Natural killer cell (primary cell): ENCODE measurements at regions of chr7 and their contacts with region 1.

Region 1: GRCh38 chr7:148698397-148699023 is at the start of gene CUL1:
- DNase-seq: peak; percentile 72 to 91
- ATAC-seq: peak; percentile 78 to 88 (median 84)
- H3K4me3 ChIP-seq: peak within 1 kb of the TSS; percentile 85
- H3K4me3 Mint-ChIP-seq: peak within 1 kb of the TSS; percentile 95
- H3K27ac ChIP-seq: peak within 1 kb of the TSS; percentile 79
- H3K27ac Mint-ChIP-seq: peak within 1 kb of the TSS; percentile 81 to 88
- H3K4me1 ChIP-seq: peaks cover 22% of the 10 kb centered on the region
- H3K4me1 Mint-ChIP-seq: peaks cover 42 to 49% of the 10 kb centered on the region in 2 donors
- H3K27me3 ChIP-seq: no peaks in the 10 kb centered on the region
- H3K27me3 Mint-ChIP-seq: no peaks in the 10 kb centered on the region
- CTCF ChIP-seq: no peak
- total RNA-seq, gene CUL1: 37.4 to 45.1 (median 43.2) TPM

Region 2: GRCh38 chr7:147878912-147879661 is 819.4 kb before region 1 on chr7:
- intact Hi-C with region 1: no loop called
- DNase-seq: no peak
- ATAC-seq: no peak
- H3K4me3 ChIP-seq: no peak overlapping the region
- H3K4me3 Mint-ChIP-seq: no peak overlapping the region
- H3K27ac ChIP-seq: no peak overlapping the region
- H3K27ac Mint-ChIP-seq: no peak overlapping the region
- H3K4me1 ChIP-seq: no peaks in the 10 kb centered on the region
- H3K4me1 Mint-ChIP-seq: no peaks in the 10 kb centered on the region
- H3K27me3 ChIP-seq: no peaks in the 10 kb centered on the region
- H3K27me3 Mint-ChIP-seq: no peaks in the 10 kb centered on the region
- CTCF ChIP-seq: no peak

Region 3: DNA sequence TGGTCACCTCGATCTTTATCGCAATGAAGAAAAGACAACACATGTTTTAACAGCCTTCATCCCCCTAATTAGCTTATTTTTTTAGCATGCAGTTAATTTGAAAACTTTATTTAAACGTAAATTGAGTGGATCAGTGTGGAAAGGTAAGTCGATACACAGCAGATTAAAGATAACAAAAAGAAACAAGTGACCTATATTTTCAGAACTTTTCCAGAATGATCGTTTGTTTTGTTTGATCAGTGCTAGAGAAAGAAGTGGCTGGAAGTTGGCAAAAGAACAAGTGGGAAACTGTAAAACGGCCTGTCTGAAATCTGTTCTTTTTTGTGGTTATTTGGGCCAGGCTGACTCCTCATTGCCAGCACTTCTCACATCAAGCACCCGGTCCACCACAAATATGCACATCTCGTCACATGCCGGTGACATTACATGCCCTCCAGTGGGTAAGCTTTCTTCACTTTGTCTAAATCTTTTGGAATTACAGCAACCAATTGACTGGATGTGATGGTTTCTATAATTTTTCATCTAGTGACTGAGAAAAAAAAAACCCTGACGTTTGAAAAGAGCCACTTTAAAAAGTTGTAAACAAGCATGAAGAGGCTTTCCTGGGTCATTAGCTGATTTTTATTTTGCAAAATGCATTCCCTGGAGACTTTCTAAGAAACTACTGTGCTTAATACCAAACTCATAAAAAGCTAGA is 74.8 kb before region 1 on chr7:
- intact Hi-C with region 1: loop called (anchors 10 kb)
- DNase-seq: no peak
- ATAC-seq: peak in 2 of 3 donors; percentile 24 to 45
- H3K4me3 ChIP-seq: no peak overlapping the region
- H3K4me3 Mint-ChIP-seq: no peak overlapping the region
- H3K27ac ChIP-seq: no peak overlapping the region
- H3K27ac Mint-ChIP-seq: no peak overlapping the region
- H3K4me1 ChIP-seq: peaks cover 23% of the 10 kb centered on the region
- H3K4me1 Mint-ChIP-seq: peaks cover 16 to 29% of the 10 kb centered on the region in 2 donors
- H3K27me3 ChIP-seq: peaks cover 5% of the 10 kb centered on the region
- H3K27me3 Mint-ChIP-seq: peaks cover 48 to 50% of the 10 kb centered on the region in 2 donors
- CTCF ChIP-seq: no peak

Region 4: GRCh38 chr7:148773334-148773733 is 74.8 kb after region 1 on chr7:
- intact Hi-C with region 1: loop called (anchors 5 kb)
- DNase-seq: peak; percentile 29 to 69
- ATAC-seq: peak; percentile 90 to 100 (median 94)
- H3K4me3 ChIP-seq: no peak overlapping the region
- H3K4me3 Mint-ChIP-seq: peak overlapping the region; percentile 84
- H3K27ac ChIP-seq: peak overlapping the region; percentile 69
- H3K27ac Mint-ChIP-seq: peak overlapping the region; percentile 85 to 88
- H3K4me1 ChIP-seq: peaks cover 20% of the 10 kb centered on the region
- H3K4me1 Mint-ChIP-seq: peaks cover 33 to 40% of the 10 kb centered on the region in 2 donors
- H3K27me3 ChIP-seq: no peaks in the 10 kb centered on the region
- H3K27me3 Mint-ChIP-seq: no peaks in the 10 kb centered on the region
- CTCF ChIP-seq: no peak

Region 5: DNA sequence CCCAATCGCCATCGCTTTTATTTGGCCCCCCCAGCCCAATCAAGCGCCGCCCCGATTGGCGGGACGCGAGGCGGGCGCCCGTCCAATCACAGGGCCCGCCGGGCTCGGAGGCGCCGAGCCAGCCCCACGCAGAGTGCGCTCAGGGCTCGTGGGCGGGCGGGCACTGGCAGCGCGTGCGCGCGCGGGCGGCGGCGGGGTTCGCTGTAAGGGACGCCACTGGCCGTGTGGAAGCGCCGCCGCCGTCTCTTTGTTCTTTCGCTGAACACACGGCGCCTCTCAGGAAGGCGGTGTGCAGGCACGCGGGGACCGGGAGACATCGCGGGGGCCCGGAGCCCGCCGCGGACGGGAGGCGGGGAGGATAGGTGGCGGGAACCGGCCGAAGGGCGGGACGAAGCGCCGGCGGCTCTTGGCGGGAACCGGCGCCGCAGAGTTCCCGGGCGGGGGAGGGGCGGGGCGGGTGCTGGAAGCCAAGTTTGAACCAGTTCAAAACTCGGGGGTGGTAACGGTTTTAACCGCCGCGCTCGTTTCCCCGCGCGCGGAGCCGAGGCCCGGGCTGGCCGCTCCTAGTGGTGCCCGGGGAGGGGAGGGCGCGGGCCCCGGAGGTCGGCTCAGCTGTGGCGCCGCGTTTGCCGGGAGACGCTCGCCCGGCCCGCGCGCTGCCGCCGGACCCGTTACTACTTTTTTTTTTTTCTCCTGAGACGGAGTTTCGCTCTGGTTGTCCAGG is 186.0 kb after region 1 on chr7:
- intact Hi-C with region 1: loop called (anchors 10 kb)
- DNase-seq: peak; percentile 95 to 96
- ATAC-seq: peak; percentile 85 to 96 (median 88)
- H3K4me3 ChIP-seq: peak overlapping the region; percentile 50
- H3K4me3 Mint-ChIP-seq: peak overlapping the region; percentile 93
- H3K27ac ChIP-seq: peak overlapping the region; percentile 83
- H3K27ac Mint-ChIP-seq: peak overlapping the region; percentile 96 to 97
- H3K4me1 ChIP-seq: peaks cover 8% of the 10 kb centered on the region
- H3K4me1 Mint-ChIP-seq: peaks cover 14 to 15% of the 10 kb centered on the region in 2 donors
- H3K27me3 ChIP-seq: no peaks in the 10 kb centered on the region
- H3K27me3 Mint-ChIP-seq: no peaks in the 10 kb centered on the region
- CTCF ChIP-seq: no peak

Region 6: DNA sequence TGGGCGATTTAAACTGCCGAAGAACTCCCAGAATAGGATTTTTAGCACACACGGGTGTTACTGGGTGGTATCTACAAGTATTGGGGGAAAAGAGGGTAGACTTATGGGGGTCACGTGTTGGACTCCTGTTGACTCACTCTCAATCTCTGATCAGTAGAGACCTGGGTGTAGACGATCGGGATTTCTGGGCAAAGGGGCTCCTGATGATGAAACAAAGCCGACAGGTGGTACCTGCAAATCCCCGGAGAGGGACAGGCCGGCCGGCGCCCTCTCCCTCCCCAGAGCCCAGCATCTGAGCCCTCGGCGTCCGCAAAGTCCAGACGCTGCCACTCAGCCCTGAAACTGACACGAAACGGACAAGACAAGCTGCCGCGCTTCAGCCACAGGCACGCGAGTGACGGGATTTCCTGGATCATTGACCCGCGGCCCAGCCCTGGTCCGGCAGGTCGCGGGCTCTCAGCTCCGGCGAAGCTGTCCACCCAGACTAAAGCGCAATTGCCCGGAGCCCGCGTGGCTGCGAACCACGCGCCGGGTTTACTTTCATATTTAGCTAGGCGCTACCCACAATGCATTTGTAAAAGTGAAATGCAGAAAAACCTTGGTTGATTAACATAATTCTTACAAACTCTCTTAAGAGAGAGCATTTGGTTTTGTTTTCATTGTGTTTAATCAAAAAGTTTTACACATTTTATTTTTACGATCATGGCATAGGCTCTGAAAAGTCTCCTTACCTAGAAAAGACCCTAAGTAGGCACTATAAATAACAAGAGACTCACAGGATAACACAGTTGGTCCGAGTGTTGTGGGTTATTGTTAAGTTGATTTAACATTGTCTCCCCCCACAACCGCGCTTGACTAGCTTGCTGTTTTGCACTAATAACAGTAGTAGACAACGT is 242.4 kb after region 1 on chr7:
- intact Hi-C with region 1: loop called (anchors 10 kb)
- DNase-seq: peak; percentile 63 to 87
- ATAC-seq: peak; percentile 79 to 90 (median 86)
- H3K4me3 ChIP-seq: peak overlapping the region; percentile 85
- H3K4me3 Mint-ChIP-seq: peak overlapping the region; percentile 94
- H3K27ac ChIP-seq: peak overlapping the region; percentile 79
- H3K27ac Mint-ChIP-seq: peak overlapping the region; percentile 95
- H3K4me1 ChIP-seq: peaks cover 7% of the 10 kb centered on the region
- H3K4me1 Mint-ChIP-seq: peaks cover 6 to 13% of the 10 kb centered on the region in 2 donors
- H3K27me3 ChIP-seq: no peaks in the 10 kb centered on the region
- H3K27me3 Mint-ChIP-seq: no peaks in the 10 kb centered on the region
- CTCF ChIP-seq: no peak